ENCODE measurements at regions of chr19 and their contacts with region 1.

Region 1: GRCh38 chr19:12681074-12681951 is at the start of gene DHPS:
- DNase-seq: peak; percentile 89
- H3K4me3 Mint-ChIP-seq: peak within 1 kb of the TSS; percentile 99
- H3K27ac Mint-ChIP-seq: peak within 1 kb of the TSS; percentile 88
- H3K4me1 Mint-ChIP-seq: peaks cover 8% of the 10 kb centered on the region
- H3K27me3 Mint-ChIP-seq: no peaks in the 10 kb centered on the region
- total RNA-seq, gene DHPS: 122 and 134 TPM in 2 replicates

Region 2: DNA sequence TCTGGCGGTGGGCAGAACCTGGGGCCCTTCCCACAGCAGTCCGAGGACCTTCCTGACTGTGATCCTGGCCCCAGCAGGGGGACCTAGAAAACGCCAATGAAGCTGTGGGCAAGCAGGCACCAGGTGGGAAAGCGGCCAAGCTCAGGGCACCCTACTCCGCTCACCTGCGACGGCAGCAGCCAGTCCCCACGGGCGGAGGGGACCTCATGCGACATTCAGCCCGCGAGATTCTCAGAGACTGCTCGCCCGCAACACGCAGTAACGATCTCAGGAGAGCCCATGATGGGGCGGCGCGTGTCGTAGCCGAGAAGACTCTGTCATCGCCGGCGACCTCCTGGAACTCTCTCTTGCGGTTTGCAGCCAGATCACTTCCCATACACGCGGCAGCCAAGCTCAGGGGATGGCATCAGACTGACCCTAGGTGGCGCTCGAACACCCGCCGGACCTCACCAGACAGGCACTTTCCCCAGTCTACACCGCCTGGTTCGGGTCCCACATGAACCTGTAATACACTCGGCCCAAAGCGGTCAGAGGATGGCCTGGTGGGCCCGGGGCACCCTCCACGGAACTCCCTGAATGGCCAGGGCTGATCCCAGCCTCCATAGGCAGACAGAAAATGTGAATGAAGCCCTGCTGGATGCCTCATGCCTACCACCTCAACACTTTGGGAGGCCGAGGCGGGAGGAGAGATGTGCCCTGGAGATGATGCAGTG is 41.3 kb before region 1 on chr19:
- intact Hi-C with region 1: loop called (anchors 1 kb)
- DNase-seq: peak; percentile 79
- H3K4me3 Mint-ChIP-seq: peak overlapping the region; percentile 63
- H3K27ac Mint-ChIP-seq: peak overlapping the region; percentile 78
- H3K4me1 Mint-ChIP-seq: peaks cover 8% of the 10 kb centered on the region
- H3K27me3 Mint-ChIP-seq: no peaks in the 10 kb centered on the region

Region 3: GRCh38 chr19:12660980-12661379 is 20.3 kb before region 1 on chr19:
- intact Hi-C with region 1: no loop called
- DNase-seq: no peak
- H3K4me3 Mint-ChIP-seq: no peak overlapping the region
- H3K27ac Mint-ChIP-seq: no peak overlapping the region
- H3K4me1 Mint-ChIP-seq: peaks cover 13% of the 10 kb centered on the region
- H3K27me3 Mint-ChIP-seq: no peaks in the 10 kb centered on the region

Region 4: GRCh38 chr19:12696366-12697335 is 15.3 kb after region 1 on chr19 and contains the start of gene FBXW9:
- intact Hi-C with region 1: loop called (anchors 2 kb)
- DNase-seq: peak; percentile 94
- H3K4me3 Mint-ChIP-seq: peak within 1 kb of the TSS; percentile 89
- H3K27ac Mint-ChIP-seq: peak within 1 kb of the TSS; percentile 95
- H3K4me1 Mint-ChIP-seq: peaks cover 3% of the 10 kb centered on the region
- H3K27me3 Mint-ChIP-seq: no peaks in the 10 kb centered on the region
- total RNA-seq, gene FBXW9: 8.8 and 9.4 TPM in 2 replicates

Region 5: DNA sequence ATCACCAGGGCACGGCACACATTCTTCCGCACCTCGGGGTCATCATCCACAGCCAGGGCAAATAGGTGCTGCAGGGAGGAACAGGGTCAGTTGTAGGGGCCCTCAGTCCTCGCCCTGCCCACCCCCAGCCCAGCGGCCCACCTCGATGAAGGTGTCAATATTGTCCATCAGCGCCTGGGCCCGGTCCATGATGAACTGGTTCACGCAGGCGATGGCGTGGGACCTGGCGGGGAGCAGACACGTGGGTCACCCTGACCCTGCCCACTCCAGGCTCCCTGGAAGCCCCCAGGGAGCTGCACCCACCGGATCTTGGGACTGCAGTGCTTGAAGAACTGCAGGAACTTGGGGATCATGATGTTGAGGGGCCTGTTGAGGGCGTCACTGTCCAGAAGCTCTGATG is 33.8 kb after region 1 on chr19:
- intact Hi-C with region 1: no loop called
- DNase-seq: no peak
- H3K4me3 Mint-ChIP-seq: no peak overlapping the region
- H3K27ac Mint-ChIP-seq: no peak overlapping the region
- H3K4me1 Mint-ChIP-seq: no peaks in the 10 kb centered on the region
- H3K27me3 Mint-ChIP-seq: no peaks in the 10 kb centered on the region

Region 6: DNA sequence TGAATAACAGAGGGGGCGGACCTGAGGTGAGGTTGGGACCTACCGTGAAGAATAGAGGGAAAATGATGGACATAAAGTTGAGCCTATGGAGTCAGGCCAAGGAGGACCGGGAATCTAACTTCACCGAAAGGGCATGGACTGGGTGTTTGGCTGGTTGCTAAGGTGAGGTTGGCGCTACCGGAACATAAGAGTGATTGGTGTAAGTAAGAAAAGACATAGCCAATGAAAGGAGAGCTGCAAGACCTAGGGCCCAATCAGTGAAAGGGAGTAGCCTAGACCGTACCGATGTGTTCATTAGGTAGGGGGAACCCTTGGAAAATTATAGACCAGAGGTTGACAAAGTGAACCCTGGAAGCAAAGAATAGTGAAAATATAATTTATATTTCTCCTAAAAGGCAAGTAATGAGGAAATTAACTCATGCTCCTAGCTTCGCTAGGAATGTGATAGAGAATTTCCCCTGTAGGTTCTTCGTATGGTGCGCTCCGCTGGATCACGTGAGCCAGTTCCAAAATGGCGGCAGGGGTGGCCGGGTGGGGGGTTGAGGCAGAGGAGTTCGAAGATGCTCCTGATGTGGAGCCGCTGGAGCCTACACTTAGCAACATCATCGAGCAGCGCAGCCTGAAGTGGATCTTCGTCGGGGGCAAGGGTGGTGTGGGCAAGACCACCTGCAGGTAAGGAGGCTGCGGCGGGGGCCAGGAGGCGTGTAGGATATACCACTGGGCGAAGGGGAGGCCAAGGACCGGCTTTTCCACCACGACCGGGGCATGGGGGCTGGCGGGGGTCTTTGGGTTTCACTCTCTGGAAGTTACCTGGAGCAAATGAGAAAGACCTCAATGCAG is 55.9 kb after region 1 on chr19 and contains the start of gene GET3:
- intact Hi-C with region 1: loop called (anchors 2 kb)
- DNase-seq: peak; percentile 78
- H3K4me3 Mint-ChIP-seq: peak within 1 kb of the TSS; percentile 98
- H3K27ac Mint-ChIP-seq: peak within 1 kb of the TSS; percentile 78
- H3K4me1 Mint-ChIP-seq: peaks cover 27% of the 10 kb centered on the region
- H3K27me3 Mint-ChIP-seq: no peaks in the 10 kb centered on the region
- total RNA-seq, gene GET3: 62.7 and 62.8 TPM in 2 replicates

Region 7: GRCh38 chr19:12847159-12848139 is 166.1 kb after region 1 on chr19:
- intact Hi-C with region 1: loop called (anchors 5 kb)
- DNase-seq: peak; percentile 78
- H3K4me3 Mint-ChIP-seq: peak overlapping the region; percentile 65
- H3K27ac Mint-ChIP-seq: no peak overlapping the region
- H3K4me1 Mint-ChIP-seq: peaks cover 9% of the 10 kb centered on the region
- H3K27me3 Mint-ChIP-seq: peaks cover 10% of the 10 kb centered on the region

Region 8: DNA sequence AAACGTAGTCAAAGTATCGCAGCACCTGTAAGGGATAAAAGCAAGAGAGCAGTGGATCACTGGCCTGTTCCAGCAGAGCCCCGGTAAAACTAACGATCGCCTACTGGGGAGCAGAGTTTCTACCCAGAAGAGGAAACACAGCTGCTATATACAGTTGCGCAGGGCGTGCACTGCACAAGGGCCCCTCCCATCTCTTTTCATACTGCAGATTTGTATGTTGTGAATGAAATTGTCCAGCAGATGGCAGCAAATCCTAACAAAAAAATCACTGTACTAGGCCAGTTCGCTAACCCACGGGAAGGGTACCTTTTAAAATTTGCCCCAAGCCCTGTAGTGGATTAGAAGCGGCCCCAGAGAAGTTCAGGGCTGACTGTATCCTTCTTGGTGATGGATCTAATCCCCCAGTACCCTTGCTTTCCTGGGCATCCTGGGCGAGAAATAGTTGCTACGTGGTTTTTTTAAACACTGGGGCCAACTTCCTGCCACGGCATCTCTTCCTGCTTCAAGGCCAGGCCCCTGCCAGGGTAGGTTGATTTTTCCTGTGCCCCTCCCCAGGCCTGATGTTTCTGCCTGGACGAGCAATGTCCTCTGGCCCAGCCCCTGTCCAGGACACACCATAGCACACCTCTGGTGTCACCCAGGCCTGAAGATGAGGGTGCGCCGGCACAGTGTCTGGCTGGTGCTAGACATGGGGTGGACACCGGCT is 595.9 kb after region 1 on chr19:
- intact Hi-C with region 1: no loop called
- DNase-seq: peak; percentile 61
- H3K4me3 Mint-ChIP-seq: no peak overlapping the region
- H3K27ac Mint-ChIP-seq: peak overlapping the region; percentile 73
- H3K4me1 Mint-ChIP-seq: peaks cover 14% of the 10 kb centered on the region
- H3K27me3 Mint-ChIP-seq: peaks cover 1% of the 10 kb centered on the region

Region 9: GRCh38 chr19:13356686-13357280 is 675.5 kb after region 1 on chr19:
- intact Hi-C with region 1: no loop called
- DNase-seq: no peak
- H3K4me3 Mint-ChIP-seq: no peak overlapping the region
- H3K27ac Mint-ChIP-seq: no peak overlapping the region
- H3K4me1 Mint-ChIP-seq: no peaks in the 10 kb centered on the region
- H3K27me3 Mint-ChIP-seq: no peaks in the 10 kb centered on the region

Measured in activated T-helper 2 cell treated with anti-CD3 and anti-CD28 coated beads, Interferon-gamma antibody, Interleukin-2, Interleukin-4, amounts not matched to agents 10 μg/mL and 5 μg/mL and 100 μg/mL, durations not matched to agents 14 hours and 24 hours and 36 hours (primary cell).